ENCODE measurements at regions of chr3 and their contacts with region 1.

Region 1: DNA sequence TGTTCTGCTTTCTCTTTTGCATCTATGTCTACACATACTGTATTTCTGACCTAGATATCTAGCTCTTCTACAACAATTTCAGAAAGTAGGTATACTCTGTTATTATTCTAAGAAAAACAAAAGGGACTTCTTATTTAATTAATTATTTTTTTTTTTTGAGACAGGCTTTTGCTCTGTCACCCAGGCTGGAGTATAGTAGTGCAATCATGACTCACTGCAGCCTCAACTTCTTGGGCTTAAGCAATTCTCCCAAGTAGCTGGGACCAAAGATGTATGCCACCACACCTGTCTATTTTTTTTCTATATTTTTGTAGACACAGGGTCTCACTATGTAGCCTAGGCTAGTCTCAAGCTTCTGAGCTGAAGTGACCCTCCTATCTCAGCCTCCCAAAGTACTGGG is 130.6 kb downstream of the MBNL1 start:
- DNase-seq: no peak
- ATAC-seq: no peak
- H3K4me3 ChIP-seq: no peak overlapping the region
- H3K4me3 Mint-ChIP-seq: peak overlapping the region in 7 of 10 donors; percentile 22 to 76 (median 38)
- H3K27ac ChIP-seq: peak overlapping the region; percentile 48
- H3K27ac Mint-ChIP-seq: peak overlapping the region in 8 of 9 donors; percentile 20 to 89 (median 66)
- H3K4me1 ChIP-seq: peaks cover 48 to 56% of the 10 kb centered on the region in 2 donors
- H3K4me1 Mint-ChIP-seq: peaks cover 49 to 91% (median 78%) of the 10 kb centered on the region in 7 donors
- H3K27me3 ChIP-seq: no peaks in the 10 kb centered on the region
- H3K27me3 Mint-ChIP-seq: no peaks in the 10 kb centered on the region

Region 2: GRCh38 chr3:152323834-152324233 is 75.5 kb before region 1 on chr3:
- CTCF ChIA-PET with region 1: no interaction called
- POLR2A ChIA-PET with region 1: no interaction called
- intact Hi-C with region 1: no loop called
- DNase-seq: no peak
- ATAC-seq: peak; percentile 37
- H3K4me3 ChIP-seq: peak overlapping the region; percentile 26
- H3K4me3 Mint-ChIP-seq: peak overlapping the region; percentile 9 to 83 (median 71)
- H3K27ac ChIP-seq: peak overlapping the region; percentile 2
- H3K27ac Mint-ChIP-seq: peak overlapping the region; percentile 6 to 91 (median 74)
- H3K4me1 ChIP-seq: peaks cover 52 to 68% of the 10 kb centered on the region in 2 donors
- H3K4me1 Mint-ChIP-seq: peaks cover 60 to 96% (median 92%) of the 10 kb centered on the region in 7 donors
- H3K27me3 ChIP-seq: no peaks in the 10 kb centered on the region
- H3K27me3 Mint-ChIP-seq: no peaks in the 10 kb centered on the region

Region 3: DNA sequence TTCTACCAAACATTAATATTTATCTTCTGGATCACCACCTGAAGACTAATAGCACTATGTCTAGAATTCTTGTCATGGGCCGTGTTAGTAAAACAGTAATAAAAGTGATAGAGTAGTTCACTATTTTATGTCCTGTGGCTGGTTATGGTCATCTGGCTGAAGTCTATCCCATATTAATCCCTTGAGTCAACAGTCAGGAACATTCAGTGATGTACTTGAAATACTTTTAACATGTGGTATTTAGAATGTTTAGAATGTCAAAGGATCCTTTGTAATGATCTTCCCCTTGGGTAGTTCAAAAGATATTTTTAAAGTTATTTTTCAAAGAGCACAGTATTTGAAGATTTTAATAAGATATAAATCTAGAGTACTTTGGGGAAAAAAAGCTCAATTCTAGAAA is 13.6 kb before region 1 on chr3:
- CTCF ChIA-PET with region 1: no interaction called
- POLR2A ChIA-PET with region 1: interaction called, 11 read pairs
- intact Hi-C with region 1: loop called in 1 of 2 experiments (anchors 1 kb)
- DNase-seq: no peak
- ATAC-seq: no peak
- H3K4me3 ChIP-seq: no peak overlapping the region
- H3K4me3 Mint-ChIP-seq: peak overlapping the region in 6 of 10 donors; percentile 22 to 53 (median 39)
- H3K27ac ChIP-seq: peak overlapping the region; percentile 36
- H3K27ac Mint-ChIP-seq: peak overlapping the region in 6 of 9 donors; percentile 5 to 87 (median 55)
- H3K4me1 ChIP-seq: peaks cover 47 to 55% of the 10 kb centered on the region in 2 donors
- H3K4me1 Mint-ChIP-seq: peaks cover 26 to 97% (median 90%) of the 10 kb centered on the region in 7 donors
- H3K27me3 ChIP-seq: no peaks in the 10 kb centered on the region
- H3K27me3 Mint-ChIP-seq: no peaks in the 10 kb centered on the region

Measured in naive thymus-derived CD4-positive, alpha-beta T cell (primary cell).